PC-9 (cell line): ENCODE measurements at regions of chr14 and their contacts with region 1.

Region 1: DNA sequence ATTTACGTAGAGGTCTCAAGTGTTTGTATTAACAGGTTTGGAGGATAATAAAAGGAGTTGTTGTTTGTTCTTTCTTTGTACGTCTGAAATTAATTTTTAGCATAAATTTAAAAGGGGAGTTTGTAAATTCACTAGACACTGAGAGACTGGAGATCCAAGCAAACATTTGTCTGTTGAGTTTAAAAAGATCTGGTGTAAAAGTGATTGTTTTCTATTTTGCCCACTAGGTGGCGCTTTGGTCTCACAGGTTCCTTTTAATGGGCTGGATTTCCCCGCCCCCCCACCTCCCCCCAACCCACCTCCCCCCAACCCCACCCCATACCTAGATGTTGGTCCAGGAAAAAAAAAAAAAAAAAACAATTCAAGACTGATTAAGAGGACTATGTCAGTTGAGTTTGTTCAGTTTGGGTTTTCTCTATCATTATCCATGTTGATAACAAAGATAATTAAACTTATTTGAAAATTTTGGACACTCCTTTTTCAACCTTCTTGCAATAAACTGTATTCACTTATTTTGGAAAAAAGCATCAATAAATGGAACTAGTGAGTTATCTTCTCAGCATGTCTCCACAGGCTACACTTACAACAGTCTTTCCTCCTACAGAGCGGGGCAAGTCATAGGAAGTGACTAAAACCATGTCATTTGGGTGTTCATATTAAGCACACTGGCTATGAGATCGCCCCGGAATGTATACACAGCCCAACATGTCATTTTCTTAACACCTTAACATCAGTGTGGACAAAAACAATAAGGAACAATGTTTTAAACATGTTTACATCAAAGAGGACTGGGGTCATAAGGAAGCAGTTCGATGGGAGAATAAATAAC is 841.1 kb downstream of the NRXN3 start:
- DNase-seq: peak; percentile 35 to 37
- H3K4me3 ChIP-seq: peak overlapping the region; percentile 17; the same call in 1 of the 2 replicates
- H3K27ac ChIP-seq: peak overlapping the region; percentile 86
- H3K4me1 ChIP-seq: peaks cover 33% of the 10 kb centered on the region
- H3K27me3 ChIP-seq: no peaks in the 10 kb centered on the region
- CTCF ChIP-seq: peak; percentile 65

Region 2: DNA sequence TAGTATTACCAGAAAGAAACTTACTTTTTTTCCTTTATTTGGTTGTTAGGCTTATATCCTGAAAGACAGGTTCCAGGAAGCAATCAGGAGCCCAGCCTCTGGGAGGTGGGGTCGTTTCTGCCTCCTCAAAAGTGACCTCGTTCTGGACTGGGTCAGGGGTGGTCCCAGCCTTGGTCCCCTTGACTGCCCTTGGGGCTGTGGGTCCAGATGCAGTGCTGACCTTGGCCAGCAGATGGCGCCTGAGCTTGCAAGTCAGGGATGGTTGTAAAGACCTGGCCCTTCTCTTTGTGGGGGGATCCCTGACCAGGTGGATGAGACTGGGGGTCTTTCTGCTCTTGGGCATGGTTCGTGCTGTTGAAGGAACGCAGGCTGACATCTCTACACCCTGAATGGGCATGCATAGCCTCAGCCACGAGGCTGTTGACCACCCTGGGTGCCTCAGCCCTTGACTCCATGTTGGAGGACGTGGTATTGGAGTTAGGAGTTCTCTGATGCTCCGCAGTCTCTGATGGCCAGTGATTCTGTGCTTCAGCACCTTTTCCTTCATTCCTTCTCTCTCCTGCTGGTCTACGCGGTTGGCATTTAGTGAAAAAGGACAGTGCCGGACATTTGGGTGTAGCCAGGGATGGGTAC is 1149.0 kb before region 1 on chr14:
- CTCF ChIA-PET with region 1: no interaction called
- POLR2A ChIA-PET with region 1: no interaction called
- intact Hi-C with region 1: no loop called
- DNase-seq: peak; percentile 58 to 86
- H3K4me3 ChIP-seq: no peak overlapping the region
- H3K27ac ChIP-seq: no peak overlapping the region
- H3K4me1 ChIP-seq: no peaks in the 10 kb centered on the region
- H3K27me3 ChIP-seq: no peaks in the 10 kb centered on the region
- CTCF ChIP-seq: peak; percentile 100

Region 3: DNA sequence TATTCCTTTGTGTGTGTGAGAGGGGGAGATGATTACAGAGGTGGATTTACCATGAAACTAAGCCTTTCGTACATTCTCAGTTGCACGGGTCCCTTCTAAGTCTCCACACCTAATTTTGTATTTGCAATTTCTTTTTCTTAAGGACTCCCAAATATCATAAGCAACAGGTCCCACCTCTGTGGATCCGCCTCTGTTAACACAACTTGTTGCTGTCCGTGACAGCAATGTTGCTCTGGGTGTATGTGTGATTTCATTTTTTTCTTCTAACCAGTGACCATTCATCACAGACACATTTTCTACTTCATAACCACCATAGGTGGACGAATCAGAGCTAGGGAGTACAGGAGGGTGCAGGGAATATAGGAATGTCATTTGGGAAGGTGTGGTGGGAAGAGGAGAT is 760.0 kb before region 1 on chr14:
- CTCF ChIA-PET with region 1: no interaction called
- POLR2A ChIA-PET with region 1: interaction called, 10 read pairs
- intact Hi-C with region 1: no loop called
- DNase-seq: no peak
- H3K4me3 ChIP-seq: no peak overlapping the region
- H3K27ac ChIP-seq: no peak overlapping the region
- H3K4me1 ChIP-seq: no peaks in the 10 kb centered on the region
- H3K27me3 ChIP-seq: peaks cover 58% of the 10 kb centered on the region
- CTCF ChIP-seq: no peak

Region 4: DNA sequence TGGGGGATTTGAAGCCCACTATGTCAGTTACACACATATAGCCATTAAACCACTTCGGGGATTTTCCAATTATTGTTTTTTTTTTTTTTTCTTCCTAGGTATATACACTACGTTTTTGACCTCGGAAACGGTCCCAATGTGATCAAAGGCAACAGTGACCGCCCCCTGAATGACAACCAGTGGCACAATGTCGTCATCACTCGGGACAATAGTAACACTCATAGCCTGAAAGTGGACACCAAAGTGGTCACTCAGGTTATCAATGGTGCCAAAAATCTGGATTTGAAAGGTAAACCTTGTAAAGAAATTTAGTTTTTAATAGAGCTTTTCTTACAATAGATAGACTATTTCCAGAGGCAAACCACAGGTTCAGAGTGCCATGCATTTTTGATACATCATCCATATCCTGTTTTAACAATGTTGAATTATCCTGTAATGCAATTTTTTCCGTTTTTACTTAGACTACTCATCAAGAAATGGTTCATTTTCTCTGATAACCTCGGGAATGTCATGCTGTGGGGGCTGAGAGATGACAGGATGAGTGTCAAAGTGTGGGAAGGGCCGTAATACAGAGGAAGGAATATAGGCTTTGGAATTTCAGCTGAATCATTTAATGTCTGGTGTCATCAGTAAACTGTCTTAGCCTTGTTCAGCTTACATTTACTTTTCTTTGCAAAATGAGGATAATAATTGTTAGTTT is 44.0 kb before region 1 on chr14:
- CTCF ChIA-PET with region 1: no interaction called
- POLR2A ChIA-PET with region 1: no interaction called
- intact Hi-C with region 1: loop called (anchors 2 kb)
- DNase-seq: no peak
- H3K4me3 ChIP-seq: no peak overlapping the region
- H3K27ac ChIP-seq: no peak overlapping the region
- H3K4me1 ChIP-seq: no peaks in the 10 kb centered on the region
- H3K27me3 ChIP-seq: no peaks in the 10 kb centered on the region
- CTCF ChIP-seq: no peak

Region 5: DNA sequence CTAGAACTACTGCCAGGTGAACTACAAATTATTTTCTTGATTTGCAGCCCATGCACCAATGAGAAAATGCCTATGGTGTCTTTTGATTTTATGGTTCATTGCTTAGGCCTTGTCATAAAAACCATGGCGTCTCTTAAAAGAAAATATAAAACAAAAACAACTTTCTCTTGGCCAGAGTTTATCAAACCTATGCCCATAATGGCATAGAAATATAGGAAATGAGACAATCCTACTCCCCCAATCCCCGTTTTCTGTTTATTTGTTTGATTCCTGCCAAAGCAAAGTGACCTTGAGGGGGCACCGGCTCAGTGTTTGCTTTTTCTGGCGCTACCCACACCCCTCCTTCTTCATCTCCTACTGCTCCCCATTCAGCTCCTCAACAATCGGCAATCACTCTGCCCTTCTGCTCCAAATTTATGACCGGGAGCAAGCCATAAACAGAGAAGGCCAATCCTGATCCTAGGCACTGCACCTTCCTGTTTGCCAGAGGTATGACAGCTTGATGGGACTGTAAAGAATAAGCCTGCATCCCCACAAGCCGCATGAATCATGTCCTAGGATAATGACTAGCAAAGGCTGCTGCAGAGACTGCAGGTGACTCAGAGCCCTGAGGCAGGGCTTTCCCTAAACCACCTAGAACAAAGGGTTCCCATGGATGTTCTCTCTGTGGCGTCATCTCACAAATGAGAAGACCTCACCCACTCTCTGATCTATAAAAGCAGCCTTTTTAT is 33.8 kb after region 1 on chr14:
- CTCF ChIA-PET with region 1: no interaction called
- POLR2A ChIA-PET with region 1: no interaction called
- intact Hi-C with region 1: no loop called
- DNase-seq: peak; percentile 11 to 60
- H3K4me3 ChIP-seq: no peak overlapping the region
- H3K27ac ChIP-seq: no peak overlapping the region
- H3K4me1 ChIP-seq: no peaks in the 10 kb centered on the region
- H3K27me3 ChIP-seq: no peaks in the 10 kb centered on the region
- CTCF ChIP-seq: no peak